Activated B cell treated with CpG ODN at 0.5 μM for 24 hours (primary cell): ENCODE measurements at regions of chr10 and their contacts with region 1.

Region 1: GRCh38 chr10:122953827-122954730 is at the start of gene C10orf88:
- DNase-seq: peak; percentile 94
- ATAC-seq: peak; percentile 94
- H3K4me3 Mint-ChIP-seq: peak within 1 kb of the TSS; percentile 89
- H3K27ac Mint-ChIP-seq: peak within 1 kb of the TSS; percentile 84
- H3K4me1 Mint-ChIP-seq: peaks cover 28% of the 10 kb centered on the region
- H3K27me3 Mint-ChIP-seq: peaks cover 2% of the 10 kb centered on the region
- CTCF ChIP-seq: no peak
- total RNA-seq, gene C10orf88: 10.9 and 12.5 TPM in 2 replicates

Region 2: DNA sequence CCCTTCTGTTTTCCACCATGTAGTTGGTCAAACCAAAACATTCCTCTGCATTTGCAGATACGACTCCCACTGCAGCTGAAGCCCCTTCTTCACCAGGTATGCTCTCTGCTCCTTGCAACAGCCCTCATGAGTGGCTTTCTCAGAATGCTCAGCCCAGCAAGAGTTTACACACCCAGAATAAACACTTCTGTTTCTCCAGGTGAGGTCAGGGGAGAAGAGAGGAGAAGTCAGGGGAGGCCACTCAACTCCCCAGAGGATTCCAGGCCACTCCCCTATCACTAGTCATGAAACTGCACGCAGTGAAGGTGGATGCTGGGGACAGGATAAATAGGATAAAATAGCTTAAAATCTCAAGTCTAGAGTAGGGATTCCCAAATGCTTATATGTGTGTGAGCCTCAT is 139.6 kb before region 1 on chr10:
- CTCF ChIA-PET with region 1: no interaction called
- POLR2A ChIA-PET with region 1: no interaction called
- intact Hi-C with region 1: no loop called
- DNase-seq: no peak
- ATAC-seq: no peak
- H3K4me3 Mint-ChIP-seq: no peak overlapping the region
- H3K27ac Mint-ChIP-seq: no peak overlapping the region
- H3K4me1 Mint-ChIP-seq: no peaks in the 10 kb centered on the region
- H3K27me3 Mint-ChIP-seq: peaks cover 28% of the 10 kb centered on the region
- CTCF ChIP-seq: no peak

Region 3: DNA sequence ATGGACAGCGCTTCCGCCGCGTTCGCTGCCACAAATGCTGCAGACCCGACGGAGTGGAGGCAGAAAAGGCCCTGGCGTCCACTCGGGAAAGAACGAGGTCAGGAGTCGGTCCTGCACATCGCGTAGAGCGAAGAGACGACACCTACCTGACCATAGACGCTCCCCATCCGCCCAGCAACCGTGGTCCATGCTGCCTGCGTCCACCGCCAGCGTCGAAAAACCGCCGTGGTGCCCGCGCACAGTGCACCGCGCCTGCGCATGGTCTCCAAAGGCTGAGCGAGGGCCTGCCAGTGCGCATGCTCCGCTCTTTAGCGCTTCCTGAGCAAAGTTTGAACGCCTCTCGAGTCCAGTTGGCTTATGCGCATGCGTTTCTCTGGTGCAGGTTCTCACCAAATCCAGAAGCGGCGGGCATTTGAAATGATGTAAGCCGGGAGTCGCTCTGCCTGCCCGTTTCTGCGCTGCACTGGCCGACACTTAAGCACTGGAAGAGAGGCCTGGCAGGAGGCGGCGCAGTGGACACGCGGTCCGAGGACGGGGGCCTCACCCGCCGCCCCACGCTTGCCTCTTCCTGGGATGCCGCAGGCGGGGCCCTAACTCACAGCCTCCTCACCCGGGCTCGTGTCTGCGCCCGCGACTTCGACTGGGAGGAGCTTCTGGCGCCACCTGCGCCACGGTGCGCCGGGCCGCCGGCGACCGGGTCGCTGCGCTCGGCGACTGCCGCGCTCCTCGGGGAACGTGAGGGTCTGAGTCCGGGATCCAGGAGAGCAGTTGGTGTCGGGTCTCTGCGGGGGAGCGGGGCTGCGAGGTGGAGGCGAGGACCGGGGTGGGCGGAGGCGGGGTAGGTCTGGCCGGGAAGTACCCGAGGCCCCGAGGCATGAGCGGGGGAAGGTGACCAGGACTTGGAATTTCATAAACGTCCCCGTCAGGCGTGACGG is 74.5 kb before region 1 on chr10 and contains the start of gene FAM24B:
- CTCF ChIA-PET with region 1: no interaction called
- POLR2A ChIA-PET with region 1: interaction called, 3 read pairs
- intact Hi-C with region 1: loop called (anchors 1 kb)
- DNase-seq: peak; percentile 83
- ATAC-seq: peak; percentile 85
- H3K4me3 Mint-ChIP-seq: peak within 1 kb of the TSS; percentile 85
- H3K27ac Mint-ChIP-seq: peak within 1 kb of the TSS; percentile 84
- H3K4me1 Mint-ChIP-seq: peaks cover 40% of the 10 kb centered on the region
- H3K27me3 Mint-ChIP-seq: no peaks in the 10 kb centered on the region
- CTCF ChIP-seq: no peak
- total RNA-seq, gene FAM24B: 7.3 and 10.0 TPM in 2 replicates

Region 4: GRCh38 chr10:122980209-122981065 is 26.4 kb after region 1 on chr10 and contains the start of gene PSTK:
- CTCF ChIA-PET with region 1: interaction called, 3 read pairs
- POLR2A ChIA-PET with region 1: interaction called, 16 read pairs
- intact Hi-C with region 1: loop called (anchors 1 kb)
- DNase-seq: peak; percentile 84
- ATAC-seq: peak; percentile 96
- H3K4me3 Mint-ChIP-seq: peak within 1 kb of the TSS; percentile 93
- H3K27ac Mint-ChIP-seq: peak within 1 kb of the TSS; percentile 96
- H3K4me1 Mint-ChIP-seq: peaks cover 18% of the 10 kb centered on the region
- H3K27me3 Mint-ChIP-seq: peaks cover 7% of the 10 kb centered on the region
- CTCF ChIP-seq: no peak
- total RNA-seq, gene PSTK: 3.9 and 5.3 TPM in 2 replicates

Region 5: DNA sequence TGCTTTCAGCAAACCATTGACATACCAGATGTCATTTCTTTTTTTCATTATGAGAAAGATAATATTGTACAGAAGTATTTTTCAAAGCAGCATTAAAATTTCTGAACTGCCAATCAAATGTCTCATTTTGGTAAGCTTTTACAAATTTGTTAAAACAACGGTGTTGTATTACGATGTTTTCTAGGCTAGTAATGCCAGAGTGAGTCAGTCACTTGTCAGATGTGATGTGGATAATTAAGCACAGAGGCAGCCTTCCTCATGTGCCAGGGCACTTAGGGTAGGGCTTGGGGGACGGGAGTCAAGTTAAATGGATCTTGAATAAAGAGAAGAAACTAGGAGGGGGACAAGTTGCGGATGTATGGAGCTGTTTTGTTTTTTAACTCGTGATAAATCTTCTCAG is 36.2 kb after region 1 on chr10:
- CTCF ChIA-PET with region 1: no interaction called
- POLR2A ChIA-PET with region 1: no interaction called
- intact Hi-C with region 1: loop called (anchors 5 kb)
- DNase-seq: no peak
- ATAC-seq: no peak
- H3K4me3 Mint-ChIP-seq: no peak overlapping the region
- H3K27ac Mint-ChIP-seq: no peak overlapping the region
- H3K4me1 Mint-ChIP-seq: no peaks in the 10 kb centered on the region
- H3K27me3 Mint-ChIP-seq: no peaks in the 10 kb centered on the region
- CTCF ChIP-seq: no peak